Naive thymus-derived CD4-positive, alpha-beta T cell (primary cell): ENCODE measurements at regions of chr17 and their contacts with region 1.

Region 1: GRCh38 chr17:55421179-55421934 is at the start of gene MMD:
- DNase-seq: peak in 6 of 9 donors; percentile 12 to 50 (median 24)
- ATAC-seq: no peak
- H3K4me3 ChIP-seq: peak within 1 kb of the TSS; percentile 89
- H3K4me3 Mint-ChIP-seq: peak within 1 kb of the TSS; percentile 89 to 96 (median 90)
- H3K27ac ChIP-seq: peak within 1 kb of the TSS; percentile 87
- H3K27ac Mint-ChIP-seq: peak within 1 kb of the TSS; percentile 83 to 98 (median 94)
- H3K4me1 ChIP-seq: peaks cover 11 to 21% of the 10 kb centered on the region in 2 donors
- H3K4me1 Mint-ChIP-seq: peaks cover 32 to 47% (median 43%) of the 10 kb centered on the region in 7 donors
- H3K27me3 ChIP-seq: no peaks in the 10 kb centered on the region
- H3K27me3 Mint-ChIP-seq: peaks cover 8 to 30% (median 19%) of the 10 kb centered on the region in 5 donors
- total RNA-seq, gene MMD: 6.6 to 35.3 (median 11.2) TPM

Region 2: GRCh38 chr17:54968262-54968987 is 452.9 kb before region 1 on chr17 and contains the starts of genes COX11 and STXBP4:
- CTCF ChIA-PET with region 1: no interaction called
- POLR2A ChIA-PET with region 1: no interaction called
- intact Hi-C with region 1: loop called (anchors 1 kb)
- DNase-seq: peak; percentile 88 to 96 (median 94)
- ATAC-seq: peak; percentile 97
- H3K4me3 ChIP-seq: peak within 1 kb of the TSS; percentile 98
- H3K4me3 Mint-ChIP-seq: no peak within 1 kb of the TSS
- H3K27ac ChIP-seq: peak within 1 kb of the TSS; percentile 85
- H3K27ac Mint-ChIP-seq: no peak within 1 kb of the TSS
- H3K4me1 ChIP-seq: peaks cover 8 to 15% of the 10 kb centered on the region in 2 donors
- H3K4me1 Mint-ChIP-seq: peaks cover 5 to 41% (median 30%) of the 10 kb centered on the region in 7 donors
- H3K27me3 ChIP-seq: no peaks in the 10 kb centered on the region
- H3K27me3 Mint-ChIP-seq: no peaks in the 10 kb centered on the region
- total RNA-seq, gene COX11: 25.7 to 92.9 (median 53.6) TPM
- total RNA-seq, gene STXBP4: 5.2 to 12.1 (median 9.4) TPM

Region 3: GRCh38 chr17:55238179-55238930 is 183.0 kb before region 1 on chr17:
- CTCF ChIA-PET with region 1: no interaction called
- POLR2A ChIA-PET with region 1: no interaction called
- intact Hi-C with region 1: loop called in 1 of 2 experiments (anchors 2 kb)
- DNase-seq: peak; percentile 60 to 81 (median 75)
- ATAC-seq: peak; percentile 92
- H3K4me3 ChIP-seq: peak overlapping the region; percentile 65
- H3K4me3 Mint-ChIP-seq: peak overlapping the region; percentile 84 to 94 (median 86)
- H3K27ac ChIP-seq: peak overlapping the region; percentile 14
- H3K27ac Mint-ChIP-seq: peak overlapping the region in 4 of 9 donors; percentile 16 to 76 (median 56)
- H3K4me1 ChIP-seq: peaks cover 6 to 19% of the 10 kb centered on the region in 2 donors
- H3K4me1 Mint-ChIP-seq: peaks cover 9 to 23% (median 19%) of the 10 kb centered on the region in 7 donors
- H3K27me3 ChIP-seq: no peaks in the 10 kb centered on the region
- H3K27me3 Mint-ChIP-seq: peaks cover 12 to 46% (median 21%) of the 10 kb centered on the region in 5 donors

Region 4: GRCh38 chr17:55341432-55341831 is 79.9 kb before region 1 on chr17:
- CTCF ChIA-PET with region 1: no interaction called
- POLR2A ChIA-PET with region 1: no interaction called
- intact Hi-C with region 1: loop called in 1 of 2 experiments (anchors 5 kb)
- DNase-seq: no peak
- ATAC-seq: no peak
- H3K4me3 ChIP-seq: no peak overlapping the region
- H3K4me3 Mint-ChIP-seq: no peak overlapping the region
- H3K27ac ChIP-seq: no peak overlapping the region
- H3K27ac Mint-ChIP-seq: no peak overlapping the region
- H3K4me1 ChIP-seq: peaks cover 0 to 27% of the 10 kb centered on the region in 2 donors
- H3K4me1 Mint-ChIP-seq: peaks cover 0 to 52% (median 12%) of the 10 kb centered on the region in 7 donors
- H3K27me3 ChIP-seq: no peaks in the 10 kb centered on the region
- H3K27me3 Mint-ChIP-seq: peaks cover 11 to 27% (median 15%) of the 10 kb centered on the region in 5 donors

Region 5: DNA sequence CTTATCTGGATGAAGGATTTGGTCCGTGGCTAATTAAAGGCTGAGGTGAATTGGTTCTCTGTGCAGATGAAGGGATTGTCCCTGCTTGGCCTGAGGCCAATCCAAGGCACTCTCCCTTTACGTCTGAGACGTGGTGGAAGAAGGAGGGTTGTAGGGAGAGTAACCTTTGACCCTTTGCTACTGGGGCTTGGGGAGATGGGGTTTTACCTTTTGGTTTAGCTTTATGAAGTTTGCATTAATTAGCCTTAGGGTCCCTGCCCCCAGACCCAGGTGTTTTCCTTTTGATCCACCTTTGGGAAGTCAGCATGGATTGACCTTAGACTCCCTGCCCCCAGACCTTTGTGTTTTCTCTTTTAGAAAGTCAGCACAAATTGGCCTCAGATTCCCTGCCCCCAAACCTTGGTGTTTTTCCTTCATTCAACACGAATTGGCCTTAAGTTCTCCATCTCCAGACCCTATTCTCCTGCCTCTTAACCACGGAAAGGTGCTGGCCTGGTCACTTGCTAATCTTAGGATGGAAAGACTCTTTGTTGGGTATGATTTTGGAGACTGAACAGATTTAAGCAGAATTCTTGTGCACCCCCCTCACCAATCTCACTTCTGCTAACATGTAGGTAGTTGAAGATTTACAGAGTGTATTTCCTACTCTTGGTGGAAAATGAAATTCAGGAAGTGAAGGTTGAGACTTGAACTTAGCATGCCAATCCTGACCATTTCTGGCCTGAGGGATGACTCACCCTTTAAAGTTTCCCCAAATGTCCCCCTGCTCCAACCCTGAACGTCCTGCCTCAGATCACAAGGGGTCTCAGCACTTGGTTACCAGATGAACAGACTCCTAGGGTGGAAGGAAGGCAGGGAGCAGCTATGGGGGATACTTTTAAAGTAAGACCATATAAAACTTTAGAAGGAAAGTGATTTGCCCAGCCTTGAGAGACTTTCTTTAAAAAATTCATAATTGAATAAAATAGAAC is 23.4 kb after region 1 on chr17:
- CTCF ChIA-PET with region 1: no interaction called
- POLR2A ChIA-PET with region 1: no interaction called
- intact Hi-C with region 1: no loop called
- DNase-seq: no peak
- ATAC-seq: peak; percentile 32
- H3K4me3 ChIP-seq: no peak overlapping the region
- H3K4me3 Mint-ChIP-seq: no peak overlapping the region
- H3K27ac ChIP-seq: no peak overlapping the region
- H3K27ac Mint-ChIP-seq: no peak overlapping the region
- H3K4me1 ChIP-seq: no peaks in the 10 kb centered on the region
- H3K4me1 Mint-ChIP-seq: no peaks in the 10 kb centered on the region
- H3K27me3 ChIP-seq: no peaks in the 10 kb centered on the region
- H3K27me3 Mint-ChIP-seq: peaks cover 0 to 14% (median 0%) of the 10 kb centered on the region in 5 donors

Region 6: GRCh38 chr17:55513885-55514591 is 92.7 kb after region 1 on chr17:
- CTCF ChIA-PET with region 1: no interaction called
- POLR2A ChIA-PET with region 1: no interaction called
- intact Hi-C with region 1: loop called (anchors 1 to 2 kb)
- DNase-seq: peak; percentile 40 to 73 (median 59)
- ATAC-seq: peak; percentile 78
- H3K4me3 ChIP-seq: no peak overlapping the region
- H3K4me3 Mint-ChIP-seq: no peak overlapping the region
- H3K27ac ChIP-seq: no peak overlapping the region
- H3K27ac Mint-ChIP-seq: no peak overlapping the region
- H3K4me1 ChIP-seq: no peaks in the 10 kb centered on the region
- H3K4me1 Mint-ChIP-seq: peaks cover 0 to 6% (median 0%) of the 10 kb centered on the region in 7 donors
- H3K27me3 ChIP-seq: no peaks in the 10 kb centered on the region
- H3K27me3 Mint-ChIP-seq: peaks cover 0 to 11% (median 8%) of the 10 kb centered on the region in 5 donors

Region 7: DNA sequence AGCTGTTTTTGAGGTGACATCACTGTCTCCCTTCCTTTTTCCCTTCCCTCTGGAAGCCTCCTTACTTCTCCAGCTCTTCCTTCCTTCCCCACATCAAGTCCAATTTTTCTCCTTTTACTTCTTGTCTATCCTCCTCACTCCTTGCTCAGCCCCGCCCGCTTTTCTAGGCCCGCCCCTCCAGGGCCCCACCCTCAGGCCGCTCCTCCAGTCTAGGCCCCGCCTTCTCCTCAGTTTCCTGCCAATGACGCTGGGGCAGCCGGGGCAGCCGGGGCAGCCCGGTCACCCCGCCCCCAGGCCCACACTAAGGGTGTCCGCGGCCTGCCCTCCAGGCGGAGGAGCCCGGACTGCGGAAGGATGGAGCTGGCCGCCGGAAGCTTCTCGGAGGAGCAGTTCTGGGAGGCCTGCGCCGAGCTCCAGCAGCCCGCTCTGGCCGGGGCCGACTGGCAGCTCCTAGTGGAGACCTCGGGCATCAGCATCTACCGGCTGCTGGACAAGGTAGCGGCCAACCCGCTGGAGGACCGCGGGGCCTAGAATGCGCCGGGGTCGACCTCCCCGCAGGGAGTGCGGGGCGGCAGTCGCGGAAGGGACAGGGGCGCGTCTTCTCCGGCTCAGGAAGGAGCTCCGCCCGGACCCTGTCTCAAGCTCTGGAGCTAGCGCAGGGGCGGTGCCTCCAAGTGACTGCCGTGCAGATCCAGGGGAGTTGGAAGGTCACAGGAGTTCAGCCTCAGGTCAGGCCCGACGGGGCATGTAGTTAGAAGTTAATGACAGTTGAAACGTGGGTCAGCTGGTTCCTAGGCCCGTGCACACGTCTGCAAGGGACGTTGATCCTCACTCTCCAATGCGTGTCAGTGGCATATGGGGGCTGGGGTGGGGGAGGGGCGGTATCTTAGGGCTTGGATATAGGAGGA is 329.6 kb after region 1 on chr17 and contains the start of gene PCTP:
- CTCF ChIA-PET with region 1: no interaction called
- POLR2A ChIA-PET with region 1: no interaction called
- intact Hi-C with region 1: loop called (anchors 1 to 2 kb)
- DNase-seq: peak; percentile 61 to 88 (median 76)
- ATAC-seq: peak; percentile 99
- H3K4me3 ChIP-seq: peak within 1 kb of the TSS; percentile 71
- H3K4me3 Mint-ChIP-seq: peak within 1 kb of the TSS; percentile 72 to 90 (median 86)
- H3K27ac ChIP-seq: peak within 1 kb of the TSS; percentile 52
- H3K27ac Mint-ChIP-seq: peak within 1 kb of the TSS; percentile 11 to 89 (median 60)
- H3K4me1 ChIP-seq: peaks cover 0 to 5% of the 10 kb centered on the region in 2 donors
- H3K4me1 Mint-ChIP-seq: peaks cover 7 to 26% (median 19%) of the 10 kb centered on the region in 7 donors
- H3K27me3 ChIP-seq: no peaks in the 10 kb centered on the region
- H3K27me3 Mint-ChIP-seq: peaks cover 19 to 39% (median 20%) of the 10 kb centered on the region in 5 donors
- total RNA-seq, gene PCTP: 2.7 to 7.4 (median 3.5) TPM

Region 8: GRCh38 chr17:56913864-56914640 is 1492.7 kb after region 1 on chr17 and contains the start of gene TRIM25:
- CTCF ChIA-PET with region 1: no interaction called
- POLR2A ChIA-PET with region 1: no interaction called
- intact Hi-C with region 1: loop called in 1 of 2 experiments (anchors 5 kb)
- DNase-seq: peak; percentile 57 to 90 (median 79)
- ATAC-seq: peak; percentile 91
- H3K4me3 ChIP-seq: peak within 1 kb of the TSS; percentile 93
- H3K4me3 Mint-ChIP-seq: peak within 1 kb of the TSS; percentile 80 to 97 (median 91)
- H3K27ac ChIP-seq: peak within 1 kb of the TSS; percentile 90
- H3K27ac Mint-ChIP-seq: peak within 1 kb of the TSS; percentile 88 to 95 (median 93)
- H3K4me1 ChIP-seq: peaks cover 29 to 35% of the 10 kb centered on the region in 2 donors
- H3K4me1 Mint-ChIP-seq: peaks cover 20 to 52% (median 46%) of the 10 kb centered on the region in 7 donors
- H3K27me3 ChIP-seq: no peaks in the 10 kb centered on the region
- H3K27me3 Mint-ChIP-seq: no peaks in the 10 kb centered on the region
- total RNA-seq, gene TRIM25: 45.9 to 133 (median 61.8) TPM